Activated naive CD4-positive, alpha-beta T cell treated with anti-CD3 and anti-CD28 coated beads, Interleukin-2, amount 10 ng/mL, durations not matched to agents 7 days and 5 days (primary cell): ENCODE measurements at regions of chr5 and their contacts with region 1.

Region 1: GRCh38 chr5:172984243-172984953 is 827 bp downstream of the ATP6V0E1 start:
- DNase-seq: peak; percentile 84
- H3K4me3 Mint-ChIP-seq: peak overlapping the region; percentile 98
- H3K27ac Mint-ChIP-seq: peak overlapping the region; percentile 99
- H3K4me1 Mint-ChIP-seq: peaks cover 27% of the 10 kb centered on the region
- H3K27me3 Mint-ChIP-seq: no peaks in the 10 kb centered on the region

Region 2: DNA sequence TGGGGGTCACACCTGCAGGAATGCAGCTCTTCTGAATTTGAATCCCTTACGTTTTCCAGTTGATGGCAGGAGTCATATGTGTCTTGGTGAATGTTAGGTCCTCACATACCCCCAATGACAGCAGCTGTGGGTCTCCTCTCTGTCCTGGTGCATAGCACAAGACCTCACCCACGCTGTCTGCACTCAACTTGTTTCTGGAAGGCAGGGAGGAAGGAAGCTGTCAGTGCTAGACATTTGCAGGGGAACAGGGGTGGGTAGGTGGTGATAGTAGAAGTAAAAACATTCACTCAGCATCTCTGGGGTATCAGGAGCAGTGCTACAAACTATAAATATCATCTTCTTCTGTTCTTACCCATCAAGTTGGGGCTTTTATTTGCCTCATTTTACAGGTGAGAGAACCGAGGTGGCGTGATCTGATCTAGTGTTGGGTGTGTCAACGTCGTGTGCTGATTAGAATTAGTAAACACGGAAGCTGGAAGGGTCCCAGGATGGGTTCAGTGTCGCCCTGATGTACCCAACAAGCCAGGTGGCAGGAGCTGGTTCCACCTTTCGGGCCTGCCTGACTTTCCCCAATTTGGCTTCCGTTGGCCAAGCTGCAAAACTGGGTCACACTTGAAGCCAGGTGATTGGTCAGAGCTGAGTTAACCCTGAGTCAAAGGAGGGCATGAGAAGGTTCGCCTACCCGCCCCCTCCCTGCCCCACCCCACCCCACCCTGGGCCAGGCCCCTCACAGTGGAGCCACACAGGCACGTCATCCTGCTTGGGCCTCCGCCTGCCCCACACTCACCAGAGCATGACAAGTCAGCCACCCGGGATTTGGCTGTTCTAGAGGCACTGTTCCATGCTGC is 134.6 kb before region 1 on chr5:
- CTCF ChIA-PET with region 1: no interaction called
- DNase-seq: no peak
- H3K4me3 Mint-ChIP-seq: no peak overlapping the region
- H3K27ac Mint-ChIP-seq: no peak overlapping the region
- H3K4me1 Mint-ChIP-seq: peaks cover 33% of the 10 kb centered on the region
- H3K27me3 Mint-ChIP-seq: no peaks in the 10 kb centered on the region

Region 3: GRCh38 chr5:173057062-173057924 is 72.9 kb after region 1 on chr5:
- CTCF ChIA-PET with region 1: interaction called, 10 read pairs
- DNase-seq: peak; percentile 100
- H3K4me3 Mint-ChIP-seq: peak overlapping the region; percentile 95
- H3K27ac Mint-ChIP-seq: peak overlapping the region; percentile 96
- H3K4me1 Mint-ChIP-seq: peaks cover 45% of the 10 kb centered on the region
- H3K27me3 Mint-ChIP-seq: no peaks in the 10 kb centered on the region

Region 4: GRCh38 chr5:173165177-173166016 is 181.0 kb after region 1 on chr5:
- CTCF ChIA-PET with region 1: no interaction called
- DNase-seq: no peak
- H3K4me3 Mint-ChIP-seq: no peak overlapping the region
- H3K27ac Mint-ChIP-seq: no peak overlapping the region
- H3K4me1 Mint-ChIP-seq: no peaks in the 10 kb centered on the region
- H3K27me3 Mint-ChIP-seq: peaks cover 3% of the 10 kb centered on the region